ENCODE measurements at regions of chr10 and their contacts with region 1.

Region 1: DNA sequence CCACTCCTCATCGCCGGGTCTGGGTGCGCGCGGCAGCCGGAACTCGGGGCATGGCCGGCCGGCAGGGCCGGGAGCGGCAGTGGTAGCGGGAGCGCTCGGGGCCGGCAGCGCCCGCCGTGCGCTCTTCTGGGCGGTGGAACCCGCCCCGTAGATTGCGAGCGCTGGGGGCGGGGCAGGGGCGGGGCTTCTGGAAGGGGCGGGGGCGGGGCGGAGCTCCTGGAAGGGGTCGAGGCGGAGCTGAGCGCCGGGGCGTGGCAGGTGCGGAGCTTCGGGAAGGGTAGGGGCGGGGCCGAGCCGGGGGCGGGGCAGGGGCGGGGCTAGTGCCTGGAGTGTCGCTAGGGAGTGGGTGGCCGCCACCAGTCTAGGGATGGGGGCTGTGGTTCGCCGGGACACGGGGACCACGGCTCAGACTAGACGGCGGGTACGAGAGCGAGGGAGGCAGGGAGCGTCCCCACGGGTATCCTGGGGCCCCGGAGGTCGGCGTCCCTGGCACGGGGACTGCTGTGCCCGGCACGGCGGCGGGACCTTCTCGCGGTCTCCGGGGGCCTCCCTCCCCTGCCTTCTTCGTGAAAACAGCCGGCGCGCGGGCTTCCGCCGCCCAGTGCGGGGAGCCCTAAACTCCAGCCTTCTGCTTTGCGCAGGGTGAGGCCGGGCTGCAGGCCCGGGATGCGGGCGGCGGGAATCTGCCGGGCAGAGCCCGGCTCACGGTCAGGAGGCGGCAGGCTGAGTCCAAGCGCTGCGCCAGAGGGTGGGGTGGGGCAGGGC is at the start of gene STK32C:
- DNase-seq: peak; percentile 76 to 89 (median 87)
- ATAC-seq: peak; percentile 97
- H3K4me3 ChIP-seq: peak within 1 kb of the TSS; percentile 65
- H3K4me3 Mint-ChIP-seq: peak within 1 kb of the TSS; percentile 83 to 93 (median 86)
- H3K27ac ChIP-seq: peak within 1 kb of the TSS; percentile 73
- H3K27ac Mint-ChIP-seq: peak within 1 kb of the TSS in 6 of 9 donors; percentile 17 to 77 (median 56)
- H3K4me1 ChIP-seq: peaks cover 4 to 6% of the 10 kb centered on the region in 2 donors
- H3K4me1 Mint-ChIP-seq: peaks cover 0 to 20% (median 12%) of the 10 kb centered on the region in 7 donors
- H3K27me3 ChIP-seq: no peaks in the 10 kb centered on the region
- H3K27me3 Mint-ChIP-seq: peaks cover 0 to 46% (median 0%) of the 10 kb centered on the region in 5 donors
- total RNA-seq, gene STK32C: 8.7 to 19.4 (median 12.0) TPM

Region 2: DNA sequence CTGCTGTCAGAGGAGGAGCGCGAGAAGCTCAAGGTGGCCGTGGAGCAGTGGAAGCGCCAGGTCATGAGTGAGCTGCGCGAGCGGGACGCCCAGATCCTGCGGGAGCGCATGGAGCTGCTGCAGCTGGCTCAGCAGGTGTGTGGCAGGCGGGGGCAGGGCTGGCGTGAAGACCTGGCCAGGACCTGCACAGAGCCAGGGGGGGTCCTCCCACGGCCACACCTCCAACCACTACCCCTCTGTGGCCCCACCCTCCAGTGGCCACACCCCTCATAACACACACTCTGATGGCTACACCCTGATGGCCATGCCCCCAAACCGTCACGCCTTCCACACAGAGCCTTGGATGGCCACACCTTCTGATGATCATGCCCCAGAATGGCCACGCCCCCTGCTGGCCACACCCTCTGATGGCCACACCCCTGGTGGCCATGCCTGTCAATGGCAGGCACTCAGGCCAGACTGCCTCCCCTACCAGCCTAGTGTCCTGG is 144.7 kb before region 1 on chr10:
- CTCF ChIA-PET with region 1: no interaction called
- POLR2A ChIA-PET with region 1: no interaction called
- intact Hi-C with region 1: loop called in 1 of 2 experiments (anchors 1 kb)
- DNase-seq: peak in 4 of 9 donors; percentile 25 to 70 (median 43)
- ATAC-seq: peak; percentile 55
- H3K4me3 ChIP-seq: no peak overlapping the region
- H3K4me3 Mint-ChIP-seq: peak overlapping the region in 2 of 10 donors; percentile 30 to 64
- H3K27ac ChIP-seq: peak overlapping the region; percentile 80
- H3K27ac Mint-ChIP-seq: peak overlapping the region in 8 of 9 donors; percentile 28 to 86 (median 73)
- H3K4me1 ChIP-seq: peaks cover 23 to 33% of the 10 kb centered on the region in 2 donors
- H3K4me1 Mint-ChIP-seq: peaks cover 16 to 54% (median 43%) of the 10 kb centered on the region in 7 donors
- H3K27me3 ChIP-seq: no peaks in the 10 kb centered on the region
- H3K27me3 Mint-ChIP-seq: no peaks in the 10 kb centered on the region

Region 3: DNA sequence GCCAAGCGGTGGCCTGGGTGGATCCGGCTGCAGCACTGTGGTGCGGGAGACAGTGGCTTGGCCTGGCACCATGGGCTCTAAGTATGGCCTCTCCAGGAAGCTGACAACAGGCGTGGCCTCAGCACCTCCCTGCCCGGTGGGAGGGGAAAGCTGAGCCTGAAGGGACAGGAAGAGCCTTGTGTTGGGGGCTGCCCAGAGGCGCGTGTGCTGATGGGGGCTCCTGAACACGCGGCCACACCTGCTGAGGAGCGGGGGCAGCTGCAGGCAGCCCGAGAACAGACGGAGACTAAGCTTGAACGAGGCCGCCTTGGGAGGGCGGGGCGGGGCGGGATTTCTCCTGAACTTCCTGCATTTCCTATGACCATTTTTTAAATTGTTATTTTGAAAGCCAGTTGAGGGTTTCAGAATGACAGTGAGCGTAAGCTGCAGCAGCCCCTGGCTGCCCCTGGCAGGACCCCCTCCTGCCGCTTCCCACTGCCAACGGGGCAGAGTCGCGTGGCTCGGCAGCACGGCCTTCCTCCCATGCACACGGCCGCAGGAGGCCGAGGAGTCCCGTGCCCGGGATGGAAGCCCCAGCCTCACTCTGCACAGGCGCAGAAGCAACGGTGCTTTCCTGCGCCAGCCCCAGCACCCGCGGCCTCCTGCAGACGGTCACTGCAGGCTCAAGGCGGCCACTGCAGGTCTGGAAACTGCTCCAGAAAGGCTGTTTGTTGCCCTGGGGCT is 78.0 kb before region 1 on chr10:
- CTCF ChIA-PET with region 1: no interaction called
- POLR2A ChIA-PET with region 1: no interaction called
- intact Hi-C with region 1: loop called in 1 of 2 experiments (anchors 5 kb)
- DNase-seq: peak in 7 of 9 donors; percentile 8 to 41 (median 35)
- ATAC-seq: peak; percentile 52
- H3K4me3 ChIP-seq: peak overlapping the region; percentile 44
- H3K4me3 Mint-ChIP-seq: peak overlapping the region; percentile 76 to 90 (median 86)
- H3K27ac ChIP-seq: peak overlapping the region; percentile 57
- H3K27ac Mint-ChIP-seq: peak overlapping the region; percentile 85 to 96 (median 92)
- H3K4me1 ChIP-seq: peaks cover 0 to 10% of the 10 kb centered on the region in 2 donors
- H3K4me1 Mint-ChIP-seq: peaks cover 22 to 51% (median 33%) of the 10 kb centered on the region in 7 donors
- H3K27me3 ChIP-seq: no peaks in the 10 kb centered on the region
- H3K27me3 Mint-ChIP-seq: no peaks in the 10 kb centered on the region

Region 4: GRCh38 chr10:132351611-132352010 is 43.6 kb after region 1 on chr10:
- CTCF ChIA-PET with region 1: no interaction called
- POLR2A ChIA-PET with region 1: no interaction called
- intact Hi-C with region 1: loop called (anchors 1 kb)
- DNase-seq: no peak
- ATAC-seq: no peak
- H3K4me3 ChIP-seq: no peak overlapping the region
- H3K4me3 Mint-ChIP-seq: no peak overlapping the region
- H3K27ac ChIP-seq: no peak overlapping the region
- H3K27ac Mint-ChIP-seq: no peak overlapping the region
- H3K4me1 ChIP-seq: no peaks in the 10 kb centered on the region
- H3K4me1 Mint-ChIP-seq: peaks cover 0 to 9% (median 5%) of the 10 kb centered on the region in 7 donors
- H3K27me3 ChIP-seq: no peaks in the 10 kb centered on the region
- H3K27me3 Mint-ChIP-seq: no peaks in the 10 kb centered on the region

Region 5: GRCh38 chr10:132452631-132453469 is 144.8 kb after region 1 on chr10:
- CTCF ChIA-PET with region 1: no interaction called
- POLR2A ChIA-PET with region 1: no interaction called
- intact Hi-C with region 1: loop called in 1 of 2 experiments (anchors 1 kb)
- DNase-seq: peak; percentile 87 to 96 (median 93)
- ATAC-seq: peak; percentile 94
- H3K4me3 ChIP-seq: peak overlapping the region; percentile 31
- H3K4me3 Mint-ChIP-seq: peak overlapping the region; percentile 33 to 72 (median 62)
- H3K27ac ChIP-seq: peak overlapping the region; percentile 88
- H3K27ac Mint-ChIP-seq: peak overlapping the region; percentile 85 to 97 (median 93)
- H3K4me1 ChIP-seq: peaks cover 13 to 23% of the 10 kb centered on the region in 2 donors
- H3K4me1 Mint-ChIP-seq: peaks cover 11 to 34% (median 23%) of the 10 kb centered on the region in 7 donors
- H3K27me3 ChIP-seq: no peaks in the 10 kb centered on the region
- H3K27me3 Mint-ChIP-seq: no peaks in the 10 kb centered on the region

Region 6: GRCh38 chr10:132516771-132517725 is 209.0 kb after region 1 on chr10:
- CTCF ChIA-PET with region 1: no interaction called
- POLR2A ChIA-PET with region 1: no interaction called
- intact Hi-C with region 1: no loop called
- DNase-seq: no peak
- ATAC-seq: peak; percentile 65
- H3K4me3 ChIP-seq: no peak overlapping the region
- H3K4me3 Mint-ChIP-seq: no peak overlapping the region
- H3K27ac ChIP-seq: no peak overlapping the region
- H3K27ac Mint-ChIP-seq: no peak overlapping the region
- H3K4me1 ChIP-seq: no peaks in the 10 kb centered on the region
- H3K4me1 Mint-ChIP-seq: peaks cover 0 to 3% (median 0%) of the 10 kb centered on the region in 7 donors
- H3K27me3 ChIP-seq: no peaks in the 10 kb centered on the region
- H3K27me3 Mint-ChIP-seq: peaks cover 0 to 10% (median 0%) of the 10 kb centered on the region in 5 donors

Measured in naive thymus-derived CD4-positive, alpha-beta T cell (primary cell).